ENCODE measurements at regions of chr15 and their contacts with region 1.

Region 1: DNA sequence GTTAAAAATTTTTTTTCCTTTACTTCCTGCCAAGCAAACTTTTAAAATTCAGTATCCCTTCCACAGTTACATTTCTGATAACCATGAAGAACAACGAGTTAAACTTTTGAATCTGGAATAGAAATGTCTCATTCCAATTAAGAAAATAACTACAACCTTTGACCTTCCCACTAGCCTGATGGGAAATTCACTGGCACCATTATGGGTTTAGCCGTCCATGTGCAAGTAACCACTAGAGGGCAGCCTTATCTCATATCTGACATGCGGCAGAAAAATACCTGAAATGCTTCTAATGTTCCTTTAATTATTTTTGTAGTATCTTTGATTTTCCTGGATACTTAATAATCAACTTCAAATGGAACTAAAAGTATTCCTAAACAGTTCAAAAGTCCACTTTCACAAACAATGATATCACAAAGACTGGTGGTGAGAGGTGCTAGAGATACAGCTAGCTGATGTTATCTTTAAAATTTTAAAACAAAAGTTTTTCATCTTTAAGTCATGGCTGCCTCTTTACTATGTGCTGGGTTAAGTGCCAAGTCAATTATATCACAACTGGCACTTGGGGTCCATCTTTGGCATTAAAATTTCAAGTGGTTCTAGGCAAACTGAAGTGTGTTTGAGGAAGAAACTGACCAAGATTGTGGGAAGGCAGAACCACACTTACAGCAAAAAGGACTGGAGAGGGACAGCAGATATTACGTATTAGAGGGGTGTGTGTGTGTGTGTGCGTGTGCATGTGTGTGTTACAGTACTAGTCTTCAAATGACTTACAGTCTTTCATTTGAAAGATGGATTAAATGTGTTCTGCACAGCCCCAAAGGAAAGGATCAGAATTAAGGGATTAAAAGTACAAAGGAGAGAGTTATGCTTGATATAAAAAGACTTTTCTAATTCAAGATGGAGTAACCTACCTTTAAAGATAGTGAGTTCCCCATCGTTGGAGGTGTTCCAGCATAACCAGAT is 107.1 kb upstream of the ICE2 start:
- DNase-seq: peak; percentile 68
- ATAC-seq: no peak
- H3K4me3 Mint-ChIP-seq: peak overlapping the region; percentile 30
- H3K27ac Mint-ChIP-seq: peak overlapping the region; percentile 87
- H3K4me1 Mint-ChIP-seq: peaks cover 85% of the 10 kb centered on the region
- H3K27me3 Mint-ChIP-seq: no peaks in the 10 kb centered on the region

Region 2: GRCh38 chr15:59688841-59689625 is 897.0 kb before region 1 on chr15 and contains the start of gene BNIP2:
- CTCF ChIA-PET with region 1: no interaction called
- POLR2A ChIA-PET with region 1: no interaction called
- intact Hi-C with region 1: loop called in 1 of 2 experiments (anchors 5 kb)
- DNase-seq: peak; percentile 99
- ATAC-seq: peak; percentile 87
- H3K4me3 Mint-ChIP-seq: peak within 1 kb of the TSS; percentile 80
- H3K27ac Mint-ChIP-seq: peak within 1 kb of the TSS; percentile 98
- H3K4me1 Mint-ChIP-seq: peaks cover 41% of the 10 kb centered on the region
- H3K27me3 Mint-ChIP-seq: no peaks in the 10 kb centered on the region
- total RNA-seq, gene BNIP2: 51.9 to 61.5 TPM

Region 3: DNA sequence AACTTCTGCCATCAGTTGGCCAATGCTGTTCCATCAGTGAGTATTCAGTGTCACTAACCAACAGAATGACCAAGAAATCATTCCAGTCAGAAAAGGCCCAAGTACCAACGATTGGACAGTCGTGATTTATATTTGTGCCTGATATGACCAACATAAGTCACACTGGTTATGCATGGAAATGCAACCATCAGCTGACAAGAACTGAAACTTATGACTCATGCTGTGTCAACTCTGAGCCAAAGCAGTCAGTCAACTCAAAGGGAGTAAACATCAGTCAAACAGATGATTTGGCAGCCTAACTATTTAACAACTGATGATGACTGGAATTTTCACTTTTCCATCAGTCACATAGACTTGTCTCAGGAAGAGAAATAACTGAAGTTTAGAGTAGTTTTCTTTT is 330.6 kb before region 1 on chr15:
- CTCF ChIA-PET with region 1: no interaction called
- POLR2A ChIA-PET with region 1: no interaction called
- intact Hi-C with region 1: no loop called
- DNase-seq: peak; percentile 53
- ATAC-seq: peak; percentile 99
- H3K4me3 Mint-ChIP-seq: no peak overlapping the region
- H3K27ac Mint-ChIP-seq: no peak overlapping the region
- H3K4me1 Mint-ChIP-seq: peaks cover 9% of the 10 kb centered on the region
- H3K27me3 Mint-ChIP-seq: peaks cover 37% of the 10 kb centered on the region

Region 4: GRCh38 chr15:60507596-60508424 is 78.2 kb before region 1 on chr15:
- CTCF ChIA-PET with region 1: interaction called, 15 read pairs
- POLR2A ChIA-PET with region 1: no interaction called
- intact Hi-C with region 1: loop called (anchors 2 kb)
- DNase-seq: peak; percentile 62
- ATAC-seq: peak; percentile 68
- H3K4me3 Mint-ChIP-seq: no peak overlapping the region
- H3K27ac Mint-ChIP-seq: peak overlapping the region; percentile 34
- H3K4me1 Mint-ChIP-seq: peaks cover 52% of the 10 kb centered on the region
- H3K27me3 Mint-ChIP-seq: no peaks in the 10 kb centered on the region

Region 5: GRCh38 chr15:60568301-60568742 is 17.7 kb before region 1 on chr15:
- CTCF ChIA-PET with region 1: interaction called, 82 read pairs
- POLR2A ChIA-PET with region 1: interaction called, 4 read pairs
- intact Hi-C with region 1: loop called in 1 of 2 experiments (anchors 2 kb)
- DNase-seq: no peak
- ATAC-seq: peak; percentile 20
- H3K4me3 Mint-ChIP-seq: no peak overlapping the region
- H3K27ac Mint-ChIP-seq: peak overlapping the region; percentile 75
- H3K4me1 Mint-ChIP-seq: peaks cover 89% of the 10 kb centered on the region
- H3K27me3 Mint-ChIP-seq: no peaks in the 10 kb centered on the region

Region 6: DNA sequence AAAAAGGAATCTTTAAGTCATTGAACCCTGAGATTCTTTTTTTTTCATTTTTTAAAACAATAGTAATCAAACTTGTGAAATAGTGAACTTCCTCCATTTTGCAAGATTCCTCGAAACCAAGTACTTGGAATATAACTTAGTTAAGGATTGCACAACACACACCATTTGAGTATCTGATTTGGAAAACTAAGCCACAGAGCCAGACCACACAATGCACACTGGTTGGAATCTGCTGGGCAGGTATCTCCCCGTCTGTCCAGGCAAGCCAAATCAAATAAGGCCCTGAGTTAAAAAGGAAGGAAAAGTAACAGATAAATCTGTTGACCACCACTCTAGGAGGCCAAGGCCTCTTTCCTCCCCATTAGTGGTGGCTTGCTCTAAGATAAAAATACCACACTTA is 70.5 kb after region 1 on chr15:
- CTCF ChIA-PET with region 1: no interaction called
- POLR2A ChIA-PET with region 1: no interaction called
- intact Hi-C with region 1: no loop called
- DNase-seq: no peak
- ATAC-seq: no peak
- H3K4me3 Mint-ChIP-seq: no peak overlapping the region
- H3K27ac Mint-ChIP-seq: no peak overlapping the region
- H3K4me1 Mint-ChIP-seq: peaks cover 34% of the 10 kb centered on the region
- H3K27me3 Mint-ChIP-seq: no peaks in the 10 kb centered on the region

Region 7: DNA sequence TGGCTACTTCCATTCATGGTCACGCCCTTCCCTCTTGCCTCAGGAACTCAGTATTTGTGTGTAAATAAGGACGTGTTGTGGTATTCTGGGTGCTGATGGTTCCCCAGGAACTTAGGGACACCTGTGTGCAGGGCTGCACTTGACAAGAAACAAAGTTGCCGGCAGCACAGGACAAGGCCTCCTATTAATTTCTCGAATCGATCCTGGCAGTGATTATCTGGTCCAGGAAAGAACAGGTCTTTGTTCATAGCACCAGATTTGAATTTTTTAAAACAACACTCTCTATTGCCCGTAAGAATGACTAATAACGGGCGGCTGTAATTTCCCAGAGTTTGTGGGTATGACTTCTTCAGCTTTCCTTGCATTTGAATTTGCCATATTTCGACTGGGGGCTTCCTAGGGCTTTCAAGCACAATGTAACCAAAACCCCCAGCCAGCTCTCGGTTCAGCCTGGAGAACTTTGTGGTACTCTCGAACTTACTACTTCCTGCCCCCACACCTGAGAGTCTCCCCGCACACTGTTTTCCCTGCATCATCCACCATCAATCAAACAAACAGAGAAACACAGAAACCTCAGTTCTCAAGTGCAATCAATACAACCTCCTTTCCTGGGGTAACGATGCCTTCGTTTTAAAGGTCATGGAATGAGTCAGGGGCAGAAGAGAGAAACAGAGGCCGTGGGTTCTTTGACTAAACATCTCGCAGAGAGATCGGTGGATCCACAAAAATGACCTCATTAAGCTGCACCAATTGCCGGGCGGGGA is 134.6 kb after region 1 on chr15:
- CTCF ChIA-PET with region 1: interaction called, 5 read pairs
- POLR2A ChIA-PET with region 1: interaction called, 4 read pairs
- intact Hi-C with region 1: loop called (anchors 2 kb)
- DNase-seq: peak; percentile 84
- ATAC-seq: peak; percentile 86
- H3K4me3 Mint-ChIP-seq: peak overlapping the region; percentile 43
- H3K27ac Mint-ChIP-seq: peak overlapping the region; percentile 95
- H3K4me1 Mint-ChIP-seq: peaks cover 61% of the 10 kb centered on the region
- H3K27me3 Mint-ChIP-seq: no peaks in the 10 kb centered on the region

Region 8: GRCh38 chr15:60854858-60855564 is 269.0 kb after region 1 on chr15:
- CTCF ChIA-PET with region 1: interaction called, 11 read pairs
- POLR2A ChIA-PET with region 1: no interaction called
- intact Hi-C with region 1: no loop called
- DNase-seq: peak; percentile 48
- ATAC-seq: peak; percentile 99
- H3K4me3 Mint-ChIP-seq: no peak overlapping the region
- H3K27ac Mint-ChIP-seq: peak overlapping the region; percentile 33
- H3K4me1 Mint-ChIP-seq: peaks cover 64% of the 10 kb centered on the region
- H3K27me3 Mint-ChIP-seq: peaks cover 3% of the 10 kb centered on the region

Region 9: DNA sequence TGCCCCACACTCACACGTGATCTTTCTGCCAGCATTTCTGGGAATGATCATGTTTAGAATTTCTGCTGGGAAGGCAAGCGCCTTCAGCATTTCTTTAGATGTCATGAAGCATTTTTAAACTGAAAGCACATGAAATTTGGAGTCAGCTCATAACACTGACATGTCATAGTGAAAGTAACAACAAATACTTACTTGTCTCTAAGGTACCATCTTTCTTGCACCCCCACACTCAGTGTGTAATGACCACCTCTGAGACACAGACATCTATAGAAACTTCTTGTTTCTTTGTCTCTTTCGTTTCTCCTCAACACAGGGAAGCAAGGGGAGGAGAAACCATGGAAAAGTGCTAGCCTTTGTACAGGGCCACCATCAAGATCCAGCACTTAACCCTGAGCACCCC is 471.4 kb after region 1 on chr15:
- CTCF ChIA-PET with region 1: no interaction called
- POLR2A ChIA-PET with region 1: no interaction called
- intact Hi-C with region 1: loop called in 1 of 2 experiments (anchors 5 kb)
- DNase-seq: peak; percentile 10
- ATAC-seq: peak; percentile 97
- H3K4me3 Mint-ChIP-seq: no peak overlapping the region
- H3K27ac Mint-ChIP-seq: no peak overlapping the region
- H3K4me1 Mint-ChIP-seq: peaks cover 14% of the 10 kb centered on the region
- H3K27me3 Mint-ChIP-seq: peaks cover 4% of the 10 kb centered on the region

Measured in activated CD4-positive, alpha-beta T cell treated with anti-CD3 and anti-CD28 coated beads for 36 hours (primary cell).